ENCODE measurements at regions of chr22 and their contacts with region 1.

Region 1: DNA sequence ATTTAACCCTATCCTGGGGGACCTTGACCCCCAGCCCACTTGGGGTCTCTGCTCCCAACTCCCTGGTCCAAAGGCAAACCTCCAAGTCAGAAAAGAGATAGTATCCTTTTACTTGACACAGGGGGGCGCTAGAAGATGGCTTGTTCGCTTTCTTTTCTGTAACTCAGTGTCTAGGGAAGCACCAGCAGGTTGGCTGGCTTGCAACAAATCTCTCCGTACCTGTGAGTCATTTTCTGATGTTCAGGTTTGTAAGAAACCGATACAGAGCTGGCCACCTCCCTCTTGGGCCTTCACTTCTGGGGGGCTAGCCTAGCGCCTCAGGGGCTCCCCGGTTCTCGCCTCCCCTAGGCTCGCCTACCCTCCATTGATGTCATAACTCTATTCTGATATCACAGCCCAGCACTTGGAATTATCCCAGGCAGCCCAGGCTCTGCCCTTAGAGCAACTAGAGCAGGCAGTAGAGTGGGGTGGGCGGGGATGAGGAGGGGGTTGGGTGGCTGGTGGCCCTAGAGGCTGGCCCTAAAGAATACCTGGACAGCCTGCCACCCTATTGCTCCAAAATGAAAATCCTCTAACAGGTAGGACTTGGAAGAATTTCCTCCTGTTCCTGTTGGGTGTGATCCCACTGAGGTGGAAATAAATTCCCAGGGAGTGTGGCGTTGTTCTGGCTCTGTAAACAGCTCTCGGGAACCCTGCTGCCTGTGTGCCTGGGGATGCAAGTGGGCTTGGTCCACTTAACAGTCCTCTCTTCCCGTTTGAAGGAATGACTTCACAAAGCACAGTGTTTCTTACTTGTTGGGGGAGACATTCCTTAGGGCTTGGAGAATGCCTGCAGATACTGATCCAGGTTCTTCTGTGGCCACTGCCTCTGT is 69.4 kb downstream of the OSBP2 start:
- DNase-seq: peak; percentile 5 to 80 (median 37)
- ATAC-seq: peak; percentile 71
- H3K4me3 ChIP-seq: no peak overlapping the region
- H3K4me3 Mint-ChIP-seq: no peak overlapping the region
- H3K27ac ChIP-seq: no peak overlapping the region
- H3K27ac Mint-ChIP-seq: no peak overlapping the region
- H3K4me1 ChIP-seq: peaks cover 4% of the 10 kb centered on the region
- H3K4me1 Mint-ChIP-seq: no peaks in the 10 kb centered on the region
- H3K27me3 ChIP-seq: no peaks in the 10 kb centered on the region
- H3K27me3 Mint-ChIP-seq: no peaks in the 10 kb centered on the region
- CTCF ChIP-seq: peak; percentile 55

Region 2: DNA sequence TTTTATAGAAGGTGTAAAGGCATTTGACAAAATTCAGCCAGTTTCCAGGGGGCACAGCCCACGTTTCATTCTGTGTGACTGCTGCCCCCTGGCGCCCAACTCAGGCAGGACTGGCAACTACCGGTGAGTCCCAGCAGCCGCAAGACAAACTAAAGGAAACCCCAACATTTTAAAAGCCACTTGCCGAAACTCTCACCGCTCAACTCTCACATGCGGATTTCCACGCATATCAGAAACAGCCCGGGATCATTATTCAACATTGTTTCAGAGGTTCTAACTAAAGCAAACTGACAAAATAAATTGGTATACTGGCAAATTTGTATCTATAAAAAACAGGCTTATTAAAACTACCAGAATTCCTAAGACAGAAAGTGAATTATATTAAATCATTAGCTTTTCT is 156.4 kb after region 1 on chr22:
- CTCF ChIA-PET with region 1: no interaction called
- POLR2A ChIA-PET with region 1: no interaction called
- intact Hi-C with region 1: loop called (anchors 1 to 5 kb)
- DNase-seq: peak; percentile 74 to 91 (median 82)
- ATAC-seq: peak; percentile 80
- H3K4me3 ChIP-seq: peak overlapping the region; percentile 1
- H3K4me3 Mint-ChIP-seq: peak overlapping the region; percentile 60
- H3K27ac ChIP-seq: no peak overlapping the region
- H3K27ac Mint-ChIP-seq: peak overlapping the region; percentile 25
- H3K4me1 ChIP-seq: peaks cover 23% of the 10 kb centered on the region
- H3K4me1 Mint-ChIP-seq: peaks cover 22% of the 10 kb centered on the region
- H3K27me3 ChIP-seq: no peaks in the 10 kb centered on the region
- H3K27me3 Mint-ChIP-seq: no peaks in the 10 kb centered on the region
- CTCF ChIP-seq: peak; percentile 99

Region 3: GRCh38 chr22:31130873-31131272 is 366.8 kb after region 1 on chr22:
- CTCF ChIA-PET with region 1: no interaction called
- POLR2A ChIA-PET with region 1: no interaction called
- intact Hi-C with region 1: no loop called
- DNase-seq: no peak
- ATAC-seq: no peak
- H3K4me3 ChIP-seq: no peak overlapping the region
- H3K4me3 Mint-ChIP-seq: no peak overlapping the region
- H3K27ac ChIP-seq: no peak overlapping the region
- H3K27ac Mint-ChIP-seq: no peak overlapping the region
- H3K4me1 ChIP-seq: no peaks in the 10 kb centered on the region
- H3K4me1 Mint-ChIP-seq: no peaks in the 10 kb centered on the region
- H3K27me3 ChIP-seq: peaks cover 2 to 7% of the 10 kb centered on the region in 2 experiments
- H3K27me3 Mint-ChIP-seq: no peaks in the 10 kb centered on the region
- CTCF ChIP-seq: no peak

Region 4: GRCh38 chr22:31148953-31149627 is 385.0 kb after region 1 on chr22:
- CTCF ChIA-PET with region 1: no interaction called
- POLR2A ChIA-PET with region 1: no interaction called
- intact Hi-C with region 1: loop called in 1 of 2 experiments (anchors 5 kb)
- DNase-seq: peak in 8 of 14 experiments; percentile 6 to 57 (median 24)
- ATAC-seq: no peak
- H3K4me3 ChIP-seq: no peak overlapping the region
- H3K4me3 Mint-ChIP-seq: no peak overlapping the region
- H3K27ac ChIP-seq: no peak overlapping the region
- H3K27ac Mint-ChIP-seq: no peak overlapping the region
- H3K4me1 ChIP-seq: no peaks in the 10 kb centered on the region
- H3K4me1 Mint-ChIP-seq: no peaks in the 10 kb centered on the region
- H3K27me3 ChIP-seq: peaks cover 0 to 4% of the 10 kb centered on the region in 2 experiments
- H3K27me3 Mint-ChIP-seq: no peaks in the 10 kb centered on the region
- CTCF ChIP-seq: peak; percentile 28